Naive thymus-derived CD4-positive, alpha-beta T cell (primary cell): ENCODE measurements at regions of chr18 and their contacts with region 1.

Region 1: GRCh38 chr18:812376-813171 is 532 bp upstream of the YES1 start:
- DNase-seq: peak; percentile 70 to 86 (median 84)
- ATAC-seq: peak; percentile 81
- H3K4me3 ChIP-seq: peak overlapping the region; percentile 60
- H3K4me3 Mint-ChIP-seq: peak overlapping the region; percentile 90 to 98 (median 95)
- H3K27ac ChIP-seq: peak overlapping the region; percentile 94
- H3K27ac Mint-ChIP-seq: peak overlapping the region; percentile 94 to 100 (median 98)
- H3K4me1 ChIP-seq: peaks cover 31 to 36% of the 10 kb centered on the region in 2 donors
- H3K4me1 Mint-ChIP-seq: peaks cover 36 to 78% (median 71%) of the 10 kb centered on the region in 7 donors
- H3K27me3 ChIP-seq: no peaks in the 10 kb centered on the region
- H3K27me3 Mint-ChIP-seq: peaks cover 0 to 6% (median 0%) of the 10 kb centered on the region in 5 donors

Region 2: GRCh38 chr18:158128-159036 is 654.2 kb before region 1 on chr18 and contains the start of gene USP14:
- CTCF ChIA-PET with region 1: no interaction called
- POLR2A ChIA-PET with region 1: no interaction called
- intact Hi-C with region 1: loop called (anchors 1 to 2 kb)
- DNase-seq: peak; percentile 83 to 97 (median 95)
- ATAC-seq: peak; percentile 97
- H3K4me3 ChIP-seq: peak within 1 kb of the TSS; percentile 38
- H3K4me3 Mint-ChIP-seq: peak within 1 kb of the TSS; percentile 85 to 99 (median 96)
- H3K27ac ChIP-seq: peak within 1 kb of the TSS; percentile 84
- H3K27ac Mint-ChIP-seq: peak within 1 kb of the TSS; percentile 80 to 98 (median 95)
- H3K4me1 ChIP-seq: peaks cover 4 to 15% of the 10 kb centered on the region in 2 donors
- H3K4me1 Mint-ChIP-seq: peaks cover 21 to 50% (median 35%) of the 10 kb centered on the region in 7 donors
- H3K27me3 ChIP-seq: no peaks in the 10 kb centered on the region
- H3K27me3 Mint-ChIP-seq: no peaks in the 10 kb centered on the region
- total RNA-seq, gene USP14: 39.2 to 70.6 (median 43.5) TPM

Region 3: DNA sequence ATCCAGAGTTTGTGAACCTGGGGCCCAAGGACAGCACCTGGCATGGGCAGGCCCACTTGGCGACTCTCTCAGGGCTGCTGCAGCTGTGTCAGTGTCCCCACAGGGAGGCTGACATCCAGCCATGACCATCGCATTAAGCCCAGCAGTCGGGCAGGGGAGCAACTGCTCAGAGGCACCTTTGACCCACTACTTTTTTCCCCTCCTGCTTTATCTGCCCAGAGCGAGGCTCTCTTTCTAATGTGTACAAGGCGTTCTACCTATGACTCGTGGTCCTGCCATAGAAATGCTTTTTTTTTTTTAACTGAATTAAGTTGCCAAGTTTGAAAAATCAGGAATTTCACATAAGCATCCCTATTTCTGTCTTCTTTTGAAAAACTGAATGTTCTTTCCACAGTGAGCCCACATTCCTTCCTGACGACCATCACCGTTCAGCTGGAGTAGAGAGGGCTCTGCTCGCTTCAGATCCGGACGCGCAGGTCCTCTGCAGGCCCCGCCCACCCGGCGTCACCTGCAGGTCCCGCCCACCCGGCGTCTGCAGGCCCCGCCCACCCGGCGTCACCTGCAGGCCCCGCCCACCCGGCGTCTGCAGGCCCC is 216.2 kb before region 1 on chr18:
- CTCF ChIA-PET with region 1: no interaction called
- POLR2A ChIA-PET with region 1: no interaction called
- intact Hi-C with region 1: loop called in 1 of 2 experiments (anchors 2 kb)
- DNase-seq: peak in 1 of 9 donors; percentile 52
- ATAC-seq: peak; percentile 75
- H3K4me3 ChIP-seq: no peak overlapping the region
- H3K4me3 Mint-ChIP-seq: peak overlapping the region in 8 of 10 donors; percentile 55 to 64 (median 56)
- H3K27ac ChIP-seq: peak overlapping the region; percentile 33
- H3K27ac Mint-ChIP-seq: peak overlapping the region in 7 of 9 donors; percentile 8 to 83 (median 73)
- H3K4me1 ChIP-seq: peaks cover 4 to 5% of the 10 kb centered on the region in 2 donors
- H3K4me1 Mint-ChIP-seq: peaks cover 0 to 17% (median 12%) of the 10 kb centered on the region in 7 donors
- H3K27me3 ChIP-seq: peaks cover 0 to 5% of the 10 kb centered on the region in 2 donors
- H3K27me3 Mint-ChIP-seq: peaks cover 21 to 48% (median 34%) of the 10 kb centered on the region in 5 donors

Region 4: GRCh38 chr18:681985-682384 is 130.6 kb before region 1 on chr18:
- CTCF ChIA-PET with region 1: no interaction called
- POLR2A ChIA-PET with region 1: no interaction called
- intact Hi-C with region 1: loop called in 1 of 2 experiments (anchors 1 kb)
- DNase-seq: peak in 8 of 9 donors; percentile 46 to 74 (median 60)
- ATAC-seq: peak; percentile 93
- H3K4me3 ChIP-seq: no peak overlapping the region
- H3K4me3 Mint-ChIP-seq: peak overlapping the region in 9 of 10 donors; percentile 8 to 57 (median 43)
- H3K27ac ChIP-seq: no peak overlapping the region
- H3K27ac Mint-ChIP-seq: peak overlapping the region in 7 of 9 donors; percentile 17 to 90 (median 84)
- H3K4me1 ChIP-seq: peaks cover 10 to 11% of the 10 kb centered on the region in 2 donors
- H3K4me1 Mint-ChIP-seq: peaks cover 10 to 28% (median 16%) of the 10 kb centered on the region in 7 donors
- H3K27me3 ChIP-seq: no peaks in the 10 kb centered on the region
- H3K27me3 Mint-ChIP-seq: no peaks in the 10 kb centered on the region

Region 5: DNA sequence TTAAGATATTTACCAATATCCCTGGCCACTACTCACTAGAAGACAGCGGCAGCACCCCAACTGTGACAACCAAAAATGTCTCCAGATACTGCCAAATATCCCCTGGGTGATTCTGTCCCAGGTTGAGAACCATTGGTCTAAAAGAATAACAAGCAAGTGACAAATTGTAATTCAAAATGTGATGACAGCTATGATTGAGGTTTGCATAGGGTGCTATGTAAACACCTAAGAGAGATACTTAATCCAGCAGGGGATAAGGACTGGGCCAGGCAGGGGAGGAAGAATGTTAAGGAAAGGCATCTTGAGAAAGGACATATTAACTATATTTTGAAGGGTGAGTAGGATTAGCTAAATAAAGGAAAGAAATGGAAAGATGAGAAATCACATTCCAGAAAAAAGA is 62.1 kb before region 1 on chr18:
- CTCF ChIA-PET with region 1: no interaction called
- POLR2A ChIA-PET with region 1: no interaction called
- intact Hi-C with region 1: no loop called
- DNase-seq: no peak
- ATAC-seq: no peak
- H3K4me3 ChIP-seq: no peak overlapping the region
- H3K4me3 Mint-ChIP-seq: no peak overlapping the region
- H3K27ac ChIP-seq: no peak overlapping the region
- H3K27ac Mint-ChIP-seq: peak overlapping the region in 1 of 9 donors; percentile 5
- H3K4me1 ChIP-seq: no peaks in the 10 kb centered on the region
- H3K4me1 Mint-ChIP-seq: peaks cover 0 to 5% (median 0%) of the 10 kb centered on the region in 7 donors
- H3K27me3 ChIP-seq: no peaks in the 10 kb centered on the region
- H3K27me3 Mint-ChIP-seq: no peaks in the 10 kb centered on the region

Region 6: GRCh38 chr18:824179-824578 is 11.6 kb after region 1 on chr18:
- CTCF ChIA-PET with region 1: no interaction called
- POLR2A ChIA-PET with region 1: interaction called, 76 read pairs
- intact Hi-C with region 1: loop called in 1 of 2 experiments (anchors 1 kb)
- DNase-seq: no peak
- ATAC-seq: no peak
- H3K4me3 ChIP-seq: no peak overlapping the region
- H3K4me3 Mint-ChIP-seq: no peak overlapping the region
- H3K27ac ChIP-seq: no peak overlapping the region
- H3K27ac Mint-ChIP-seq: no peak overlapping the region
- H3K4me1 ChIP-seq: no peaks in the 10 kb centered on the region
- H3K4me1 Mint-ChIP-seq: peaks cover 3 to 18% (median 9%) of the 10 kb centered on the region in 7 donors
- H3K27me3 ChIP-seq: no peaks in the 10 kb centered on the region
- H3K27me3 Mint-ChIP-seq: peaks cover 0 to 17% (median 0%) of the 10 kb centered on the region in 5 donors

Region 7: GRCh38 chr18:2641638-2642037 is 1829.1 kb after region 1 on chr18:
- CTCF ChIA-PET with region 1: no interaction called
- POLR2A ChIA-PET with region 1: interaction called, 3 read pairs
- intact Hi-C with region 1: loop called (anchors 1 to 10 kb)
- DNase-seq: peak in 7 of 9 donors; percentile 38 to 58 (median 52)
- ATAC-seq: peak; percentile 18
- H3K4me3 ChIP-seq: peak overlapping the region; percentile 36
- H3K4me3 Mint-ChIP-seq: peak overlapping the region in 9 of 10 donors; percentile 73 to 87 (median 84)
- H3K27ac ChIP-seq: peak overlapping the region; percentile 83
- H3K27ac Mint-ChIP-seq: peak overlapping the region in 3 of 9 donors; percentile 91 to 99 (median 95)
- H3K4me1 ChIP-seq: peaks cover 70 to 73% of the 10 kb centered on the region in 2 donors
- H3K4me1 Mint-ChIP-seq: peaks cover 0 to 54% (median 47%) of the 10 kb centered on the region in 7 donors
- H3K27me3 ChIP-seq: no peaks in the 10 kb centered on the region
- H3K27me3 Mint-ChIP-seq: no peaks in the 10 kb centered on the region